ENCODE measurements at regions of chr2 and their contacts with region 1.

Region 1: GRCh38 chr2:16623031-16623430 is 42.6 kb downstream of the CYRIA start:
- DNase-seq: peak; percentile 85
- H3K4me3 ChIP-seq: no peak overlapping the region
- H3K27ac ChIP-seq: no peak overlapping the region
- H3K4me1 ChIP-seq: no peaks in the 10 kb centered on the region
- H3K27me3 ChIP-seq: no peaks in the 10 kb centered on the region
- CTCF ChIP-seq: no peak

Region 2: GRCh38 chr2:16570516-16570915 is 52.5 kb before region 1 on chr2:
- CTCF ChIA-PET with region 1: no interaction called
- dilution Hi-C with region 1: loop called (anchors 5 kb)
- in situ Hi-C with region 1: no loop called
- intact Hi-C with region 1: no loop called
- DNase-seq: no peak
- H3K4me3 ChIP-seq: no peak overlapping the region
- H3K27ac ChIP-seq: no peak overlapping the region
- H3K4me1 ChIP-seq: no peaks in the 10 kb centered on the region
- H3K27me3 ChIP-seq: no peaks in the 10 kb centered on the region
- CTCF ChIP-seq: no peak

Region 3: GRCh38 chr2:16656784-16657391 is 33.9 kb after region 1 on chr2:
- CTCF ChIA-PET with region 1: no interaction called
- dilution Hi-C with region 1: loop called (anchors 5 kb)
- in situ Hi-C with region 1: no loop called
- intact Hi-C with region 1: no loop called
- DNase-seq: no peak
- H3K4me3 ChIP-seq: no peak overlapping the region
- H3K27ac ChIP-seq: no peak overlapping the region
- H3K4me1 ChIP-seq: peaks cover 14% of the 10 kb centered on the region
- H3K27me3 ChIP-seq: no peaks in the 10 kb centered on the region
- CTCF ChIP-seq: no peak

Region 4: GRCh38 chr2:16665748-16666448 is 42.9 kb after region 1 on chr2 and contains the start of gene CYRIA:
- CTCF ChIA-PET with region 1: no interaction called
- dilution Hi-C with region 1: no loop called
- in situ Hi-C with region 1: no loop called
- intact Hi-C with region 1: loop called (anchors 5 kb)
- DNase-seq: peak; percentile 36
- H3K4me3 ChIP-seq: peak within 1 kb of the TSS; percentile 43 to 63 (median 58)
- H3K27ac ChIP-seq: no peak within 1 kb of the TSS
- H3K4me1 ChIP-seq: peaks cover 6% of the 10 kb centered on the region
- H3K27me3 ChIP-seq: peaks cover 7% of the 10 kb centered on the region
- CTCF ChIP-seq: no peak
- total RNA-seq, gene CYRIA: 1.1 to 2.0 TPM

Region 5: GRCh38 chr2:17208511-17208910 is 585.5 kb after region 1 on chr2:
- CTCF ChIA-PET with region 1: no interaction called
- dilution Hi-C with region 1: no loop called
- in situ Hi-C with region 1: no loop called
- intact Hi-C with region 1: no loop called
- DNase-seq: peak; percentile 6
- H3K4me3 ChIP-seq: no peak overlapping the region
- H3K27ac ChIP-seq: no peak overlapping the region
- H3K4me1 ChIP-seq: no peaks in the 10 kb centered on the region
- H3K27me3 ChIP-seq: peaks cover under 1% of the 10 kb centered on the region
- CTCF ChIP-seq: no peak

Measured in mammary epithelial cell (primary cell).